AG04450 (cell line): ENCODE measurements at regions of chr17 and their contacts with region 1.

Region 1: DNA sequence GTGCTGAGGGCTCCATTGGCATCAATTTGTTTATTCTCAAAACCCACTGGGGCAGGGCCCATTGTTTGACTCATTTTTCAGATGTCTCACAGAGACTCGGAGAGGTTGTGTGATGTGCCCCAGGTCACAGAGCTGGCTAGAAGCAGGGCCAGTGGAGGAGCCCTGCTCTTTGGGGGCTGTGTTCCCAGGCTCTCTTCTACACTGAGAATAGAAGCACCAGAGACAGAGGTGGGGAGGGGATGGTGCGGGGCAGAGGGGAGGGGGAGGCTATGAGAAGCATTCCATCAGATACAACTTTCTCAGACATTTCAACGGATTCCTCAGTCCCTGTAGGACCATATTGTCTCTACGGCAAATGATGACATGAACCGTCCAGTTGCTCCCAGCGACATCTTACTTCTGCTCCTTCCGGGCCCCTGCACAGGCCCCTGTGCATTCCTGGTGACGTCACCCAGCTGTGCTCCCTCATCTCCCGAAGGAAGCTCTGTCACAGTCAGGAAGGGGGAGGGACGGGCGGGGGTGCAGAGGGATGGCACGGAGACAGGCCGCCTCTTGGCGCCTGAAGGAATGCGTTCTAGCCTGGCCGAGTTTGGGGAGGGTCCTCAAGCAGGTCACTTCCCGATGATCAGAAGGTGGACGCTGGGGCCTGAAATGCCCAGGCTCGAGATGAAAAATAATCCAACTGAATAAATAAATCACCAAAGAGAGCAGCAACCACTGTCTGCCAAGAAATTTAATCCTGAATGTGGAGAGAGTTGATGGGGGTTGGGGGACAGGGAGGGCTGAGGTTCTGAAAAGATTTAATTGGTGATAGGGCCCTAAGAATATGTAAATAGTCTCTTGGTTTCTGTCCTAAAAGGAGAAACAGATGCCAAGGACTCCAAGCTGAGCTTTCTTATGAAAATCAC is 114.1 kb downstream of the NOG start:
- DNase-seq: no peak
- H3K4me3 ChIP-seq: no peak overlapping the region
- H3K27ac ChIP-seq: no peak overlapping the region
- H3K27me3 ChIP-seq: no peaks in the 10 kb centered on the region
- CTCF ChIP-seq: no peak

Region 2: GRCh38 chr17:56592487-56593085 is 115.0 kb before region 1 on chr17:
- CTCF ChIA-PET with region 1: interaction called, 17 read pairs
- POLR2A ChIA-PET with region 1: no interaction called
- DNase-seq: no peak
- H3K4me3 ChIP-seq: peak overlapping the region; percentile 67
- H3K27ac ChIP-seq: no peak overlapping the region
- H3K27me3 ChIP-seq: peaks cover 37% of the 10 kb centered on the region
- CTCF ChIP-seq: peak; percentile 59

Region 3: GRCh38 chr17:56793957-56794356 is 86.4 kb after region 1 on chr17:
- CTCF ChIA-PET with region 1: no interaction called
- POLR2A ChIA-PET with region 1: no interaction called
- DNase-seq: no peak
- H3K4me3 ChIP-seq: no peak overlapping the region
- H3K27ac ChIP-seq: no peak overlapping the region
- H3K27me3 ChIP-seq: peaks cover 8% of the 10 kb centered on the region
- CTCF ChIP-seq: no peak